Right ventricle myocardium superior (tissue), 1 donor: ENCODE measurements at regions of chr12 and their contacts with region 1.

Region 1: GRCh38 chr12:57069523-57069922 is 9.1 kb downstream of the NEMP1 start:
- DNase-seq: no peak
- ATAC-seq: peak; percentile 97

Region 2: DNA sequence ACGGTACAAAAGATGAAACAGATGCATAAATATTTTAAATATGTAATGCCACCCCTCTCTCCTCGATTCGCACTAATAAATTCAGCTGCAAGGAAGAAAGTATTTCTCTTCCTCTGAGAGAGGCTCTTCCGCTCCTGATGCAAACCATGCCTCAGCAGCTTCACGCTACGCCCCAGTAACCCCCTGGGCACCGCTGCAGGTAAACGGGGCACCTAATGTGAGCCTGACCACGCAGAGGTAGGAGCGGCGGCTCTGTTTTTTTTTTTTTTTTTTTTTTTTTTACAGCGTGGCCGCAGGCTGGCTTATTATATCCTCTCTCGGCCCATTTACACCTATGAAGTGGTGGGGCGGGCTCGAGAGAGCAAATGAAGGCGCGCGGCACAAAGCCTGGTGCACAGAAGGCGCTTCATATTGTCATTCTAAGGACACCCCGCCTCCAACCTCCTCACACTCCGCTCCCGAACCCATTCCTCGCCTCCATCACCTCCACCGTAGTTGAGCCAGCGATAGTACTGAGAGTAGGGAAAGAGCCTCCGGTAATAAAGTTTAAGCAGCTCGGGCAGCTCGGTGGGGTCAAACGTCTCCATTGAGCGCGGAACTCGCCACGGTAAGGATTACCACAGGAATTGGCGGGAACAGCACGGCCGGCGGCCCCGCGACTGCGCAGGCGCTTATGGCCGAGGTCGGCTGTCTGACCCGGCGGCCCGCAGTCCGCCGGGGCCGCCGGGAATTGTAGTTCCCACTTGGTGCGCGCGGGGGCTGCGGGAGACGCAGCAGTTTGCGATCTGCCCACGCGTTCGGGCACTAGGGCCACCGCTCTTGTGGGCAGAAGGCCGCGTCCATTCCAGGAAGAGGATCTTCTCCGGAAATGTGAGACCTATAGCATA is 317.6 kb before region 1 on chr12 and contains the start of gene PRIM1:
- intact Hi-C with region 1: loop called (anchors 10 kb)
- DNase-seq: peak; percentile 92
- ATAC-seq: peak; percentile 99
- total RNA-seq, gene PRIM1: 3.6 TPM

Region 3: DNA sequence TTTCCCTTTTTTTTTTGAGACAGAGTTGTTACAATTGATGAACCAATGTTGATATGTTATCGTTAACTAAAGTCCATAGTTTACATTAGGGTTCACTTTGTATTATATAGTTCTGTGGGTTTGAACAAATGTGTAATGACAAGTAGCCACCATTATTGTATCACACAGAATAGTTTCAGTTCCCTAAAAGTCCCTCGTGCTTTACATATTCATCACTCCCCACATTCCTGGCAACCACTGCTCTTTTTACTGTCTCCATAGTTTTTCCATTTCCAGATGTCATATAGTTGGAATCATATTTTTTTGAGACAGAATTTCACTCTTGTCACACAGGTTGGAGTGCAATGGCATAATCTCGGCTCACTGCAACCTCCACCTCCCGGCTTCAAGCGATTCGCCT is 293.9 kb before region 1 on chr12:
- intact Hi-C with region 1: no loop called
- DNase-seq: no peak
- ATAC-seq: no peak

Region 4: GRCh38 chr12:57111031-57111734 is 41.7 kb after region 1 on chr12 and contains the start of gene STAT6:
- intact Hi-C with region 1: loop called (anchors 1 kb)
- DNase-seq: peak; percentile 89
- ATAC-seq: peak; percentile 79
- total RNA-seq, gene STAT6: 49.5 TPM